GM12878 (cell line): ENCODE measurements at regions of chr12 and their contacts with region 1.

Region 1: GRCh38 chr12:69354556-69355187 is 4.9 kb upstream of the YEATS4 start:
- DNase-seq: no peak
- ATAC-seq: no peak
- H3K4me3 ChIP-seq: no peak overlapping the region
- H3K27ac ChIP-seq: no peak overlapping the region
- H3K4me1 ChIP-seq: no peaks in the 10 kb centered on the region; the same call in 1 of the 2 replicates
- H3K27me3 ChIP-seq: no peaks in the 10 kb centered on the region
- CTCF ChIP-seq: no peak
- EP300 ChIP-seq: no peak
- POLR2A ChIP-seq: no peak
- RAD21 ChIP-seq: no peak

Region 2: DNA sequence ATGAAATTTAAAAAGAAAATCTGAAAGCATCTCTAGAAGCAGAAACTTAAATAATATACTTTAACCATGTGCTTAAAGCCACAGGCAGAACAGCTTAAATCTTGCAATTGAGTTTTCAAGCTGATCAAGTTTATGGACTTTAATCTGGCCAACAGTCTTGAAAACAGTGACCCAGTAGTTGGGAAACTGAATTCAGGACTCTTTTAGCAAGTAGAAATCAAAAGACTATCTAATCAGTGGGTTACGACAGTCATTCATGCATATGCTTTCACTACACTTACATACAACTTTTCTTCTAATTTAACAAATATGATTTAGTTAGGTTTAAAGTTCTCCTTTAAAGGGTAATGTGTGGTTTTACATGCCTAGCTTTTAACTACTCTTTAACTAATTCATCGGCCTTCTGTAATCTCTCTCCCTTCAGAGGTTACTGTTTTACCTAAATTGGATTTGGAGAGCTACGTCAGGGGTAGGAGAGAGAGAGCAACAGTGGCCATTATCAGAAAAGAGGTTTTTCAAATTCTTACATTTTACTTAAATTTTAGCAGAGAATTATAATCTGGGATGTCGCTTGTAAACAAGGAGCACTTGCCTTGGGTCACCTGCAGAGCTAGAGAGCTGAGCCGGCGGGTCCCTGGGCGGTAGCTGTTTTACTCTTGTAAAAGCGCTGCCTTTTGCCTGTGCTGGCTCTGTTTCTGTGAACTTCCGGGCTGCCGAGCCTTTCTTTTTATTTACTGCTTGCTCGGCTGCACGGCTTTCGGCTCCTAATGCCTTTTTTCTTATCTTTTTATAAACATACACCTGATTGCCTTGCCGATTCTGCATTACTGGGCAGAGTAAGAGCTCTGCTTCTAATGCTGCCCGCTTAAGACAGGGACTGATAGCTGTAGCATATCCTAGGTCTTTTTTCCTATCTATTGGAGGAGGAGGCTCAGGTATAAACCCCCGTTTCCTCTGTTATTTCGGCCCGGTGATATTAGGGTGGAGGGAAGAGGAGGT is 23.9 kb before region 1 on chr12:
- CTCF ChIA-PET with region 1: interaction called, 21 read pairs
- POLR2A ChIA-PET with region 1: no interaction called
- RAD21 ChIA-PET with region 1: interaction called, 6 read pairs
- SMC1A ChIA-PET with region 1: interaction called, 5 read pairs
- in situ Hi-C with region 1: no loop called
- intact Hi-C with region 1: no loop called
- DNase-seq: no peak
- ATAC-seq: peak; percentile 86
- H3K4me3 ChIP-seq: peak overlapping the region; percentile 48
- H3K27ac ChIP-seq: no peak overlapping the region
- H3K4me1 ChIP-seq: no peaks in the 10 kb centered on the region
- H3K27me3 ChIP-seq: no peaks in the 10 kb centered on the region
- CTCF ChIP-seq: no peak
- EP300 ChIP-seq: no peak
- POLR2A ChIP-seq: peak; percentile 59
- RAD21 ChIP-seq: no peak

Region 3: GRCh38 chr12:69932676-69933552 is 578.2 kb after region 1 on chr12:
- CTCF ChIA-PET with region 1: no interaction called
- POLR2A ChIA-PET with region 1: no interaction called
- RAD21 ChIA-PET with region 1: no interaction called
- SMC1A ChIA-PET with region 1: no interaction called
- in situ Hi-C with region 1: no loop called
- intact Hi-C with region 1: no loop called
- DNase-seq: no peak
- ATAC-seq: peak; percentile 76
- H3K4me3 ChIP-seq: no peak overlapping the region
- H3K27ac ChIP-seq: no peak overlapping the region; the same call in 1 of the 2 replicates
- H3K4me1 ChIP-seq: peaks cover 5% of the 10 kb centered on the region; the same call in 1 of the 2 replicates
- H3K27me3 ChIP-seq: no peaks in the 10 kb centered on the region
- CTCF ChIP-seq: no peak
- EP300 ChIP-seq: no peak
- POLR2A ChIP-seq: no peak
- RAD21 ChIP-seq: no peak